ENCODE measurements at regions of chr19 and their contacts with region 1.

Region 1: GRCh38 chr19:46730953-46731501 is 14.1 kb upstream of the PRKD2 start:
- DNase-seq: no peak
- H3K4me3 ChIP-seq: no peak overlapping the region
- H3K27ac ChIP-seq: no peak overlapping the region
- H3K4me1 ChIP-seq: no peaks in the 10 kb centered on the region
- H3K27me3 ChIP-seq: no peaks in the 10 kb centered on the region
- CTCF ChIP-seq: no peak
- POLR2A ChIP-seq: no peak

Region 2: GRCh38 chr19:46614114-46614722 is 116.8 kb before region 1 on chr19:
- intact Hi-C with region 1: loop called (anchors 10 kb)
- DNase-seq: peak; percentile 81 to 83
- H3K4me3 ChIP-seq: no peak overlapping the region
- H3K27ac ChIP-seq: no peak overlapping the region
- H3K4me1 ChIP-seq: peaks cover 11 to 35% of the 10 kb centered on the region in 2 donors
- H3K27me3 ChIP-seq: no peaks in the 10 kb centered on the region
- CTCF ChIP-seq: peak; percentile 44 to 91 (median 74)
- POLR2A ChIP-seq: no peak

Region 3: GRCh38 chr19:46678110-46678732 is 52.8 kb before region 1 on chr19:
- intact Hi-C with region 1: no loop called
- DNase-seq: no peak
- H3K4me3 ChIP-seq: no peak overlapping the region
- H3K27ac ChIP-seq: no peak overlapping the region
- H3K4me1 ChIP-seq: no peaks in the 10 kb centered on the region
- H3K27me3 ChIP-seq: no peaks in the 10 kb centered on the region
- CTCF ChIP-seq: no peak
- POLR2A ChIP-seq: no peak

Region 4: DNA sequence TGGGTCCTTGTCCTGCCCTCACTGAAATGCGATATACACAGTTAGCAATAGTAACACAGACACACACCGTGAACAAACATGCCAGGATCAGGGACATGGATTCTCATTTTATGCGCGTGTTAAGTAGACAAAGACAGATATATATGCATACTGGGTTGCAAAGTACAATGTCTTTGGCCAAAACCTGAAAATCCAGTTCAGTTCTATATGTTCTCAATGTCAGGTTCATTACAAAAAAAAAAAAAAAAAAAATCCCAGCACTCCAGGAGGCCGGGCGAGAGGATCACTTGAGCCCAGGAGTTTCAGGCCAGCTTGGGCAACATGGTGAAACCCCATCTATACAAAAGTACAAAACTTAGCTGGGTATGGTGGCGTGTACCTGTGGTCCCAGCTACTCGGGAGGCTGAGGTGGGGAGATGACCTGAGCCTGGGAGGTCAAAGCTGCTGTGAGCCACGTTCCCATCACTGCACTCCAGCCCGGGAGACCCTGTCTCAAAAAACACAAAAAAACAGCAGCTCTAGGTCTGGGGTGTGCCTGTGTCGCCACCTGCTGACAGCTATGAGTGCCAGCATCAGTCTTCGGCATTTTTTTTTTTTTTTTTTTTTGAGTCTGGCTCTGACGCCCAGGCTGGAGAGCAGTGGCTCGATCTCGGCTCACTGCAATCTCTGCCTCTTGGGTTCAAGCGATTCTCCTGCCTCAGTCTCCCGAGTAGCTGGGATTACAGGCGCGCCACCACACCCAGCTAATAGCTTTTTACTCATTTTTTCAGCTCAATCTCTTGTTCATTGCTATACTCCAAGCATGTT is 109.3 kb after region 1 on chr19:
- intact Hi-C with region 1: no loop called
- DNase-seq: peak; percentile 47 to 52
- H3K4me3 ChIP-seq: no peak overlapping the region
- H3K27ac ChIP-seq: no peak overlapping the region
- H3K4me1 ChIP-seq: peaks cover 5 to 6% of the 10 kb centered on the region in 2 donors
- H3K27me3 ChIP-seq: no peaks in the 10 kb centered on the region
- CTCF ChIP-seq: peak; percentile 30 to 84 (median 79)
- POLR2A ChIP-seq: no peak

Measured in thyroid gland (tissue), 4 donors.